HepG2 (cell line): ENCODE measurements at regions of chr1 and their contacts with region 1.

Region 1: GRCh38 chr1:150578965-150579798 is at the start of gene MCL1:
- DNase-seq: peak; percentile 93
- ATAC-seq: peak; percentile 88
- H3K4me3 ChIP-seq: peak within 1 kb of the TSS; percentile 93 to 96 (median 94)
- H3K27ac ChIP-seq: peak within 1 kb of the TSS; percentile 92
- H3K4me1 ChIP-seq: peaks cover 39% of the 10 kb centered on the region
- H3K27me3 ChIP-seq: no peaks in the 10 kb centered on the region; a peak in 1 of 5 replicates
- CTCF ChIP-seq: 0 out of 2 replicates have a peak, but pooled peaks have one; percentile 6
- EP300 ChIP-seq: no peak; a peak in 1 of 4 replicates
- POLR2A ChIP-seq: peak; percentile 95 to 99
- RAD21 ChIP-seq: peak; percentile 57
- total RNA-seq, gene MCL1: 113 and 125 TPM in 2 replicates

Region 2: GRCh38 chr1:150529017-150529416 is 50.2 kb before region 1 on chr1:
- CTCF ChIA-PET with region 1: no interaction called
- POLR2A ChIA-PET with region 1: interaction called, 14 read pairs
- in situ Hi-C with region 1: no loop called
- intact Hi-C with region 1: no loop called
- DNase-seq: no peak
- ATAC-seq: no peak
- H3K4me3 ChIP-seq: peak overlapping the region in 2 of 3 experiments; percentile 3 to 21; a peak in 1 of 6 replicates
- H3K27ac ChIP-seq: no peak overlapping the region
- H3K4me1 ChIP-seq: peaks cover 52% of the 10 kb centered on the region
- H3K27me3 ChIP-seq: no peaks in the 10 kb centered on the region
- CTCF ChIP-seq: no peak
- EP300 ChIP-seq: no peak
- POLR2A ChIP-seq: no peak
- RAD21 ChIP-seq: no peak

Region 3: DNA sequence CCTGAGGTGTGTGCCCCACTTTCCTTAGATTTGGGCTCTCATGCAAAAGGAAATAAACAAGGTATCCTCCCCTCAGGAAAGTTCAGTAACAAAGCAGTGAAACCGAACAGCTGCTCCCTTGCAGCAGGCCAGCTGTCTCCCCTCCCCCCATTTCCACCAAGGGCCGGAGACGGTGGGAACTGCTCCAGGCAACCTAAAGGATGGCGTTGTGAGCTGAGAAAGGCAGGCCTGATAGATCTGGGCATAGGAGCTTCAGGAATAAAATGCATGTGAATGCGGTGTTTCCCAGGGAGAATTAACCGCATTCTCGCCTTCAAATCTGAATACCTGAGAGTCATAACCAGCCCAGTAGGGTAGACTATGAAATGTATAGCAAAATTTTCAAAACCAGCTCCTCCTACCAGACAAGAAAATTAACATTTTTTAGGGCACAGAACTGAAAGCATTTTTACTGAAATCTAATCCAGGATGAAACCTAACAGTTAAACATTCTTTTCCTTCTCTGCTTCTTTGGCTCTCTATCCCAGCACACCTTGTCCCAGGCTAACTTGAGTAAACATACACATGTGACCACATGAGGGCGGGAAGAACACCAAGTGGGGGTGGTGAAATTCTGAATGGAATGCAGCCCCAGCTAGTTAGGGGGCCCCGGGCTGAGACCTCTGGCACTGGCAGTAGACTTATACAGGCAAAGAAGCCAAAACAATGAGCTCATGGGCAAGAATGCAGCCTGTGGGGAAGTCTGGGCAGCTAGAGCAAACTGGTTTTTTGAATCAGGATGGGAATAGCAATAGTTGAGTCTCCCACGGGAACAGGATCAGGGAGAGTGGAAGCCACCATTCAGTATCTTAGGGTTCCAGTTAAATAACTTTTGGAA is 11.2 kb before region 1 on chr1:
- CTCF ChIA-PET with region 1: no interaction called
- POLR2A ChIA-PET with region 1: interaction called, 469 read pairs
- in situ Hi-C with region 1: no loop called
- intact Hi-C with region 1: loop called (anchors 1 kb)
- DNase-seq: peak; percentile 95
- ATAC-seq: peak; percentile 76
- H3K4me3 ChIP-seq: peak overlapping the region in 2 of 3 experiments; percentile 5 to 38; a peak in 3 of 6 replicates
- H3K27ac ChIP-seq: peak overlapping the region; percentile 65
- H3K4me1 ChIP-seq: peaks cover 78% of the 10 kb centered on the region
- H3K27me3 ChIP-seq: no peaks in the 10 kb centered on the region
- CTCF ChIP-seq: peak; percentile 40
- EP300 ChIP-seq: peak in 1 of 2 experiments; percentile 81; a peak in 2 of 4 replicates
- POLR2A ChIP-seq: no peak; a peak in 1 of 4 replicates
- RAD21 ChIP-seq: no peak

Region 4: DNA sequence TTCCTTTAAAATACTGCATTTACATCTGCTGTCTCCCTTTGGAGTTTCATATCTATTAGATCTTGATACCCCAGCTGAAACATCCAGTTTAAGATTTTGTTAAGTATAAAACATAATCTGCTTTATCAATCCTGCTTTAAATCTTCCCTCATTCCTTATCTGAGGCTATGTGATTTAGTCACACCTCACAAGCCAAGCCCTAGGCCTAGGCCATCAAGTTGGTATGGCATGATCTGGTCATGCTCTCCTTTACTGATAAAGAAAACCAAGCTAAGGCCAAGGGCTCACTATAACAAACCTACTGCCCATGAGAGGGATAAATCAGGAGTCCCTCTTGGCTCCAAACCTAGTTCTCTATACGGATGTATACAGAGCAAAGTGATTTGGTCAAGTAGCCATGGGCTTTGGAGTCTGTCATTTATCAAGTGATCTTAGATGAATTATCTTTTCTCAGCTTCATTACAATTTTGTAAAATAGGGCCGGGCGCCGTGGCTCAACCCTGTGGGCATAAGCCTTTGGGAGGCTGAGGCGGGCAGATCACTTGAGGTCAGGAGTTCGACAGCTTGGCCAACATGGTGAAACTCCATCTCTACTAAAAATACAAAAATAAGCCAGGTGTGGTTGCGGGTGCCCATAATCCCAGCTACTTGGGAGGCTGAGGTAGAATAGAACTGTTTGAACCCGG is 27.4 kb after region 1 on chr1:
- CTCF ChIA-PET with region 1: no interaction called
- POLR2A ChIA-PET with region 1: interaction called, 108 read pairs
- in situ Hi-C with region 1: no loop called
- intact Hi-C with region 1: loop called (anchors 5 kb)
- DNase-seq: no peak
- ATAC-seq: no peak
- H3K4me3 ChIP-seq: no peak overlapping the region
- H3K27ac ChIP-seq: peak overlapping the region; percentile 17
- H3K4me1 ChIP-seq: peaks cover 66% of the 10 kb centered on the region
- H3K27me3 ChIP-seq: no peaks in the 10 kb centered on the region
- CTCF ChIP-seq: no peak
- EP300 ChIP-seq: no peak
- POLR2A ChIP-seq: no peak
- RAD21 ChIP-seq: no peak

Region 5: DNA sequence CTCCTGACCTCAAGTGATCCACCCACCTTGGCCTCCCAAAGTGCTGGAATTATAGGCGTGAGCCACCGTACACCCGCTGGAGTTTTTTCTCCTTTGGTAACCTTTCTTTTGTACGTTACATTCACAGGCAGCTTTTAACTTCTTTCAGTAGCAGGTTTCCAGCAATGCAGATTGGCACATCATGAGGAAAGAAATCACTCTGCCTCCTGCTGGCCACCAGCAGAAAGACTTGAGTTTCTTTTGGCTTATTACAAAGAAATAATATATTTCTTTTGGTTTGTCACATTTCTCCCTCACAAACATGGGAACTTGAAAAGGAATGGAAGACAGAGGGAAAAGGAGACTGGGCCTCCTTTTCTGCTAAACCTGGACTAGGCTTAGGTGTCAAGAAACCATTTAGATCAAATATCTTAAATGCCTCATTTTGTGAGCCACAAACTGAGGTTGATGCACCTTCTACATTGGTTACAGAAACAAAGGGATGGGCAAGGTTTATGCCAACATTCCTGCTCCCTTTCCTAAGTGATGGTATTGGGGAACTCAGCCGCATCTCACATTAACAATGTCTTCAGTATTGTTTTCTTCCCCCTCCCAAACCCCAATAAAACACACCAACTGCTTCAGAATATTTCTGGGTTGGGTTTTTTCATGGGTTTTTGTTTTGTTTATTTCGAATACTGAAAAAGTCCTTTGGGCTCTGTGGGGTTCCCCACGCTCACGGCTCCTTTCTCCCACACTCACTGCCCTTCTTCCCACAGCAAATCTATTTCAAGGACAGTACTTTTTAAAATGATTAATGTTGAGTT is 42.5 kb after region 1 on chr1:
- CTCF ChIA-PET with region 1: interaction called, 5 read pairs
- POLR2A ChIA-PET with region 1: interaction called, 40 read pairs
- in situ Hi-C with region 1: no loop called
- intact Hi-C with region 1: loop called (anchors 2 kb)
- DNase-seq: peak; percentile 48
- ATAC-seq: no peak
- H3K4me3 ChIP-seq: no peak overlapping the region
- H3K27ac ChIP-seq: no peak overlapping the region
- H3K4me1 ChIP-seq: peaks cover 38% of the 10 kb centered on the region
- H3K27me3 ChIP-seq: no peaks in the 10 kb centered on the region
- CTCF ChIP-seq: peak; percentile 68
- EP300 ChIP-seq: no peak
- POLR2A ChIP-seq: no peak
- RAD21 ChIP-seq: peak; percentile 65

Region 6: DNA sequence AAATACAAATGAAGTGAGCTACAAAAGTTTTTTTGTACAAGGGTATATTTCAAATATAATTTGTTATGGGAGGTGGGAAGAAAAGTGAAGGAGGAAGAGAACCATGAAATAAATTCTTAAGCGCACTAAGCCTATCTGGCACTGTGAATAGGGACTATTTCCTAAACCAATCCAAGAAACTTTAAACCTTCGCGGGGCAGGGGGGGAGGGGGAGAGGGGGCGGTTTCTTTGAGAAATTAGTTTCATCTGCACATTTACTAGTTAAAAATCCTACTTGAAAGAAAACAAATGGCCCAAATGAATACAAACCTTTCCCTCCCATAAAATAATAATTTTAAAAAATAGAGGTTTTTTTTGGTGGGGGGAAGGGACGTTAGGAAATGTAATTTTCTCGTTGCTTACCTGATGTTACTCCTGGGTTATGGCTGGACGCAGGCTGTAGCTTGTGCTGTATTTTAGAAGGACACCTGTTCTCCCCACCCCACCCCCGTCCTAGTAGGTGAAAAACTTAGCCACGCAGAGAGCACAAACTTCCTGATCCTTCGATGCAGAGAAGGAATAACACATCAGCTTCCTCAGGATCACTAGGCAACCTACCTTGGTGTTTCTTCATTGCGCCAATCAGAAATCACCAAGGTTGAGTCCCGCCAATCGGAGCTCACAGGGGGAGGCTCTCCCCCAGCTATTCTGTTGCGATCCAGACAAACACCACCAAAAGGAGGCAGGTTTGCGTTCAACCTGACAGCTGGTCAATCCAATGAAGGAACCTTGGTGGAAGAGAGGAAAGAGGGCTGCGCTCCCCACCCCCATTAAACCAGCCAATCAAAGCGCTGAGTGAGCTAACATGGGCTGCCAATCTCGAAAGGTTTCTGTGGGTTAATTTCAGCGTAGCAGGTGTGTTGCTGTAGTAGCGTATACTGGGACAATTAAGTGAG is 117.7 kb after region 1 on chr1 and contains the start of gene GOLPH3L:
- CTCF ChIA-PET with region 1: no interaction called
- POLR2A ChIA-PET with region 1: interaction called, 16 read pairs
- in situ Hi-C with region 1: no loop called
- intact Hi-C with region 1: no loop called
- DNase-seq: peak; percentile 99
- ATAC-seq: peak; percentile 100
- H3K4me3 ChIP-seq: peak within 1 kb of the TSS; percentile 73 to 99 (median 83)
- H3K27ac ChIP-seq: peak within 1 kb of the TSS; percentile 73
- H3K4me1 ChIP-seq: 0 out of 2 replicates have a peak, but pooled peaks cover 17% of the 10 kb centered on the region
- H3K27me3 ChIP-seq: no peaks in the 10 kb centered on the region; a peak in 2 of 5 replicates
- CTCF ChIP-seq: no peak
- EP300 ChIP-seq: no peak
- POLR2A ChIP-seq: peak; percentile 72 to 73
- RAD21 ChIP-seq: no peak
- total RNA-seq, gene GOLPH3L: 12.8 and 19.3 TPM in 2 replicates

Region 7: DNA sequence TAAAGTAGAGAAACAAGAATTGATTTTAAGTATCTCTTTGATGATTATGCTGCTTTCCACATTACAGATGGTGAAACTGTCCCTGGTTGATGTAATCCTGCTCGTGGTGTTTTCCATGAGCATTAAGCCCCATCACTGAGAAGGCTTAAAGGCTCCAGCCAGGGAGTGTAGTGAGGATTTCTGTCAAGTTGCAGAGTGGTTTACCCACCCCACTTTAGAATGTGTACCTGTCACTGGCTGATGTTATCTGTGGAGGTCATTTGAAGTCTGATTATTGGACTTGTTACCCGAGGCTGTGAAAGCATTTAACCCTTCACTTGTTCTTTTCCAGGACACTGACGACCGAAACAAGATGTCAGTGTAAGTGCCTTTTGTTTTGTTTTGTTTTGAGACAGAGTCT is 382.6 kb after region 1 on chr1:
- CTCF ChIA-PET with region 1: no interaction called
- POLR2A ChIA-PET with region 1: no interaction called
- in situ Hi-C with region 1: no loop called
- intact Hi-C with region 1: no loop called
- DNase-seq: no peak
- ATAC-seq: peak; percentile 53
- H3K4me3 ChIP-seq: no peak overlapping the region
- H3K27ac ChIP-seq: no peak overlapping the region
- H3K4me1 ChIP-seq: peaks cover 12% of the 10 kb centered on the region; the same call in 1 of the 2 replicates
- H3K27me3 ChIP-seq: no peaks in the 10 kb centered on the region
- CTCF ChIP-seq: no peak
- EP300 ChIP-seq: no peak
- POLR2A ChIP-seq: no peak
- RAD21 ChIP-seq: no peak